ENCODE measurements at regions of chr5 and their contacts with region 1.

Region 1: DNA sequence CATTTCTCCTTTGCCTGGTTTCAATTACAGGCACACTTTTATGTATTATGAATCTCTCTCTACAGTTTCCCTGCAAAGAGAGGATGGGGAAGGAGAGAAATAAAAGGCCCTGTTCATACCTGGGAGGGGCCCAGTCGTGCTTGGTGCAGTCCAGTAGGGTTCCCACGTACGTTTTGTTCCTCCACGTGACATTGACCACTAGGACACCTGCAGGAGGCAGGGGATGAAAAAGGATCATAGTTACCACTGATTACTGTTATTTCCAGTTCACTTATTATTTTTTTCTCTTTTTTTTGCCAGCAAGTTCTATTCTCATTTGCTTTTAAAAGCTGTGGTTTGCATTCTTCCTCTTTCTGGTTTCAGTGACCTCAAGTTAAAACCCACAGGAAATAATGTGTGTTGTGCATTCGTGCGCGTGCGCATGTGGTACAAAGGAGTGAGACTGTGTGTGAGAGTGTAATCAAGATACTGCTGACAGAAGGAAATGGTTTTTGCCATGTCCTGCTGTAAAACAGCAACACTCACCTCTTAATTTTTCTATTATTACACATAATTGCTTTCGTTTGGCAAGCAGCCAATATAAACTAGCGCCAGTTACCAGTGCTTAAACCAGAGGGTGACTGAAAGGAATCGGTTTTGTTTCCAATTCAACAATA is 96.8 kb downstream of the ZNF608 start:
- DNase-seq: peak; percentile 98
- H3K4me3 ChIP-seq: peak overlapping the region in 2 of 3 experiments; percentile 17 to 49
- H3K27ac ChIP-seq: peak overlapping the region; percentile 92
- H3K4me1 ChIP-seq: peaks cover 46% of the 10 kb centered on the region
- H3K27me3 ChIP-seq: no peaks in the 10 kb centered on the region
- CTCF ChIP-seq: no peak
- POLR2A ChIP-seq: peak; percentile 60

Region 2: DNA sequence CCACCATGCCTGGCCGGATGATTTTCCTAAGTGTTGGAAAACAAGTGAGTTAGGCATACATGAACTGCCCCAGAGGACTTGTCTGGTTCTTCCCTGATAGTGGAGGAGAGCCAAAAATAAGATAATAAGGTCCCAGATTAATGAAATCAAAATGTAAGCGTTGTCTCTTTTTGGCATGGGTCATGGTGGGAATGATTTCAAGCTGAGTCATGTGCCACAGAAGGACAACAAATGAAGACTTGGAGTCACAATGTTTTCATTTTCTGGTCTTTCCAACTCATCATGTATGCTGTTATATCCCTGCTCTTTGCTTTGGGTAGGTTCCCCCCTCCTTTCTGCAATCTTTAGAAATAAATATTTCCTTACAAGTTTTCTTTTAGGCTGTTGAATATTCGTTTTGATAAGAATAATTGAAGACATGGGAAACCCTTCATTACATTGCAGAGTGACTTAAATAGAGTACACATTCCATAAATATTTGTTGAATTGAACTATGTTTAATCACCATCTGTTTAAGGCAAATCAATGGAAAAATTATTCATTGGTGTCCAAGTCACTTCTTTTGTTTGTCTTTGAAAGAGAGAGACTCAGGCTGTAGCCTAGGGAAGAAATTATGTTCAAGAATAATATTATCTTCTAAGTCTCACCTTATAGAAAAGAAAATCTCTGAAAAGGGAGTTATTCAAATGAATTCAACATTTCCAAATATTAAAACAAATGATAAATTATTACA is 941.4 kb before region 1 on chr5:
- CTCF ChIA-PET with region 1: no interaction called
- POLR2A ChIA-PET with region 1: no interaction called
- dilution Hi-C with region 1: no loop called
- intact Hi-C with region 1: loop called (anchors 2 kb)
- DNase-seq: peak; percentile 77
- H3K4me3 ChIP-seq: no peak overlapping the region
- H3K27ac ChIP-seq: peak overlapping the region; percentile 64
- H3K4me1 ChIP-seq: peaks cover 23% of the 10 kb centered on the region
- H3K27me3 ChIP-seq: no peaks in the 10 kb centered on the region
- CTCF ChIP-seq: no peak
- POLR2A ChIP-seq: no peak

Region 3: DNA sequence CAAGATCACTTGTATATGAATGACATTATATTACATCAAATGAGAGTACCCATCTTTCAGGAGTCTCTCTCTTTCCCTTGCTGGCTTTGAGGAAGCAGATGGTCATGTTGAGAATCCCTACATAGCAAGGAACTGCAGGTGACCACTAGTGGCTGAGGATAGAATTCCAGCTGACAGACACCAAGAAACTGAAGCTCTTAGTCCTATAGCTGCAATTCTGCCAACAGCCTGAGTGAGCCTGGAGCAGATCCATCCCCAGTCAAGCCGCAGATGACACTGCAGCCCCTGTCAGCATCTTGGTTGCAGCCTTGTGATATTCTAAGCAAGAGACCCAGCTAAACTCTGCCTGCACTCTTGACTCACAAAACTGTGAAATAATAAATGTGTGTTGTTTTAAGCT is 606.2 kb before region 1 on chr5:
- CTCF ChIA-PET with region 1: no interaction called
- POLR2A ChIA-PET with region 1: no interaction called
- dilution Hi-C with region 1: no loop called
- intact Hi-C with region 1: no loop called
- DNase-seq: no peak
- H3K4me3 ChIP-seq: no peak overlapping the region
- H3K27ac ChIP-seq: no peak overlapping the region
- H3K4me1 ChIP-seq: no peaks in the 10 kb centered on the region
- H3K27me3 ChIP-seq: no peaks in the 10 kb centered on the region
- CTCF ChIP-seq: no peak
- POLR2A ChIP-seq: no peak

Region 4: GRCh38 chr5:124438903-124439281 is 210.7 kb before region 1 on chr5:
- CTCF ChIA-PET with region 1: no interaction called
- POLR2A ChIA-PET with region 1: no interaction called
- dilution Hi-C with region 1: no loop called
- intact Hi-C with region 1: loop called (anchors 2 kb)
- DNase-seq: peak; percentile 80
- H3K4me3 ChIP-seq: peak overlapping the region in 1 of 3 experiments; percentile 2
- H3K27ac ChIP-seq: no peak overlapping the region
- H3K4me1 ChIP-seq: peaks cover 7% of the 10 kb centered on the region
- H3K27me3 ChIP-seq: no peaks in the 10 kb centered on the region
- CTCF ChIP-seq: no peak
- POLR2A ChIP-seq: no peak

Region 5: DNA sequence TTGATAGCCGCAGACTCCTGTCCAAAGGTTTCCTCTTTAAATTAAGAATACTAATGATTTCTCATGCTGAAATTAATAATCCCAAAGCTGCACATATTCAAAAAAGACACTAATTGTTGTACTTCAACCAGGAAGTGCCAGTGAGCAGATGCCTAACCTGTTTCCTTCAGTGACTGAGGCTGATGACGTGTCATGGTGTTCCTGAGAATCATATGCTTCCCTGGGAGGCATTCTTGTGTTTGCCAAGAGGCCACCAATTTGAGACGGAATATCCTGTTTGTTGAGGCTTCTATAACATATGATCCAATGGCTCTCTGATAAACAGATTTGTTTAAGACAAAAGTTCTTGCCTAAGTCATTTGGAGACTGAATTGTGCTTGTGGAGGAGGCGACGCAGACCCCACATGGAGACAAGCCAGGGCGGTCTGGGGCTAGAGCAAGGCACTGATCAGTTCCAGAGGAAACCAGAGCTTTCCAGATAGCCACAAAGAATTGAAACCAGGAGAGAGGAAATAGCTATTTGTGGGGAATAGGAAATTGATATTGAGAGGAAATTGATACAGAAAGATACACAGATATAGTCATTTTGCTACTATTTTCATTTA is 163.2 kb after region 1 on chr5:
- CTCF ChIA-PET with region 1: no interaction called
- POLR2A ChIA-PET with region 1: no interaction called
- dilution Hi-C with region 1: no loop called
- intact Hi-C with region 1: loop called (anchors 1 kb)
- DNase-seq: peak; percentile 82
- H3K4me3 ChIP-seq: no peak overlapping the region
- H3K27ac ChIP-seq: peak overlapping the region; percentile 81
- H3K4me1 ChIP-seq: peaks cover 10% of the 10 kb centered on the region
- H3K27me3 ChIP-seq: no peaks in the 10 kb centered on the region
- CTCF ChIP-seq: no peak
- POLR2A ChIP-seq: no peak

Region 6: GRCh38 chr5:125093776-125094175 is 444.2 kb after region 1 on chr5:
- CTCF ChIA-PET with region 1: no interaction called
- POLR2A ChIA-PET with region 1: no interaction called
- dilution Hi-C with region 1: no loop called
- intact Hi-C with region 1: loop called (anchors 5 kb)
- DNase-seq: peak; percentile 90
- H3K4me3 ChIP-seq: no peak overlapping the region
- H3K27ac ChIP-seq: peak overlapping the region; percentile 83
- H3K4me1 ChIP-seq: peaks cover 12% of the 10 kb centered on the region
- H3K27me3 ChIP-seq: no peaks in the 10 kb centered on the region
- CTCF ChIP-seq: no peak
- POLR2A ChIP-seq: no peak

Region 7: DNA sequence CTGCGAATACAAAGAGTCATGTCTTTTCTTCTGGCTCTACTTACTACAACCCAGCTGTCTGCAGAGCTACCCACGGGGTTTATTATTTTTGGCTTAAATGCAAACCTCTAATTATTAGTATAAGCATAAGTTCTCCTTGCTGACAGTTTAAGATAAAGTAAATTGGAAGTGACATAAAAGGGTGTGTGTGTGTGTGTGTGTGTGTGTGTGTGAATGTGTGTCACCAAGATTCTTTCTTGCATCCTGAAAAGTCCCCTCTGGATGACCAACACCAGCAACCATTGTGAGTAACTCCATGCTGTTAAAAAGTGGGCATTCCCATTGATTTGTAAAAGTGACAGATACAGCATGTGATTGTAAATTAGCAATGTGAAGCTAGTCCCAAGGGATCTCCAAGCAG is 900.7 kb after region 1 on chr5:
- CTCF ChIA-PET with region 1: no interaction called
- POLR2A ChIA-PET with region 1: no interaction called
- dilution Hi-C with region 1: no loop called
- intact Hi-C with region 1: loop called (anchors 2 kb)
- DNase-seq: peak; percentile 97
- H3K4me3 ChIP-seq: no peak overlapping the region
- H3K27ac ChIP-seq: peak overlapping the region; percentile 69
- H3K4me1 ChIP-seq: peaks cover 30% of the 10 kb centered on the region
- H3K27me3 ChIP-seq: no peaks in the 10 kb centered on the region
- CTCF ChIP-seq: no peak
- POLR2A ChIP-seq: peak; percentile 66

Measured in endothelial cell of umbilical vein (primary cell).